ENCODE measurements at regions of chr5 and their contacts with region 1.

Region 1: DNA sequence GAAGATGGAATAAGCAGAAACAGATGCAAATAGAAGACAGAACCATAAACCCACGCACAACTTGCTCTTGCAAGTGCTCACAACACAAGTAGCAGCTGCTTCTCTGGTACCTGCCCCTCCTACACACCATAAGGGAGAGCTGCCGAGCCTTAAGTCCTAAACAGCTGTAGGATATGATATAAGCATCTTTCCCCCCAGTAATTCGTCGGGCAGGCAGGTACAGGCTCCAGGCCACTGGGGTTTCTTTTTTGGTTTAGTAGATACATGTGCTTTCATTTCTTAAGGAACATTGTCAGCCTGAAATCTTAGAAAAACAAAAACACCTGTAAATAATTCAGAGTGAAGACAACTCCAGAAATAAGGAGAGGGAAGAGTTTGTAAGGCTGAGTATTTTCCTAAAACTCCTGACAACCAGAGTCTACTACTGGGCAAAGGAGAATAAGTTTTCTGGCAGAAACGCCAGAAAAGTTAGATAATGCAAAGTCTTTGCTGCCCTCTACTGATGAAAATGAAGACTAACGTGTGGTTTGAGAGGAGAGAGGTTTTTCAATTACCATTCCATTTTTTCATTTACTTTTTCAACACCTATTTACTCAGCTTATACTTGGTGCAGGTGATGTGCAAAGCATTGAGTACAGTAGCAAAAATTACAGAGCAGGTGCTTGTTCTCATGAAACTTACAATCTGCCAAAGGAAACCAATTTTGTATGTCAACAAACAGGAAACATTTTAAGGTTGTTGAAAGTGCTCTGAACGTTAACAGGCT is 20.1 kb upstream of the TCERG1 start:
- DNase-seq: peak in 2 of 9 experiments; percentile 34 to 57
- ATAC-seq: peak; percentile 64
- H3K4me3 ChIP-seq: no peak overlapping the region
- H3K4me3 Mint-ChIP-seq: no peak overlapping the region
- H3K27ac ChIP-seq: no peak overlapping the region
- H3K27ac Mint-ChIP-seq: no peak overlapping the region
- H3K4me1 ChIP-seq: no peaks in the 10 kb centered on the region
- H3K4me1 Mint-ChIP-seq: peaks cover 5% of the 10 kb centered on the region
- H3K27me3 ChIP-seq: no peaks in the 10 kb centered on the region
- H3K27me3 Mint-ChIP-seq: peaks cover 27% of the 10 kb centered on the region
- CTCF ChIP-seq: peak; percentile 85

Region 2: DNA sequence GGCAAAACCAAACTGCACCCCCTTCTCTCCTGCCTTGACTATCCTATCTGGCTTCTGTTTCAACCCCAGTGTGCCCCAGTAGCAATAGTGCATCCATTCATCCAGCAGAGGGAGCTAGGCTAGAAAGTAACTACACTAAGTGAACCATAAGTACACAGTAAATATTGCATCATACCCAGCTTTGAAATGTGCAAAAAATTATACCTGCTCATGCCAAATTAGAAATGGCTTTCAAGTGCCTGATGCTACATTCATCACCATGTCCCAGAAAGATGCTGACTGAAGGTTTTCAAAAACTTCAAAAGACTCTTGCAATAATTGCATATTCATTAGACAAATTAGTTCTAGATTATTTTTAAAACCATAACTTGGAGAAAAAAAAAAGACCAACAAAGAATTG is 745.4 kb before region 1 on chr5:
- CTCF ChIA-PET with region 1: no interaction called
- POLR2A ChIA-PET with region 1: no interaction called
- intact Hi-C with region 1: loop called (anchors 5 to 10 kb)
- DNase-seq: peak in 2 of 9 experiments; percentile 18 to 37
- ATAC-seq: no peak
- H3K4me3 ChIP-seq: no peak overlapping the region
- H3K4me3 Mint-ChIP-seq: no peak overlapping the region
- H3K27ac ChIP-seq: no peak overlapping the region
- H3K27ac Mint-ChIP-seq: no peak overlapping the region
- H3K4me1 ChIP-seq: no peaks in the 10 kb centered on the region
- H3K4me1 Mint-ChIP-seq: no peaks in the 10 kb centered on the region
- H3K27me3 ChIP-seq: no peaks in the 10 kb centered on the region
- H3K27me3 Mint-ChIP-seq: no peaks in the 10 kb centered on the region
- CTCF ChIP-seq: no peak

Region 3: GRCh38 chr5:146291421-146292074 is 135.5 kb before region 1 on chr5:
- CTCF ChIA-PET with region 1: interaction called, 3 read pairs
- POLR2A ChIA-PET with region 1: no interaction called
- intact Hi-C with region 1: loop called (anchors 1 kb)
- DNase-seq: peak in 2 of 9 experiments; percentile 57 to 66
- ATAC-seq: peak; percentile 62
- H3K4me3 ChIP-seq: no peak overlapping the region
- H3K4me3 Mint-ChIP-seq: no peak overlapping the region
- H3K27ac ChIP-seq: no peak overlapping the region
- H3K27ac Mint-ChIP-seq: no peak overlapping the region
- H3K4me1 ChIP-seq: no peaks in the 10 kb centered on the region
- H3K4me1 Mint-ChIP-seq: no peaks in the 10 kb centered on the region
- H3K27me3 ChIP-seq: no peaks in the 10 kb centered on the region
- H3K27me3 Mint-ChIP-seq: no peaks in the 10 kb centered on the region
- CTCF ChIP-seq: peak; percentile 84

Region 4: GRCh38 chr5:146440870-146441495 is 13.9 kb after region 1 on chr5:
- CTCF ChIA-PET with region 1: interaction called, 10 read pairs
- POLR2A ChIA-PET with region 1: no interaction called
- intact Hi-C with region 1: no loop called
- DNase-seq: no peak
- ATAC-seq: no peak
- H3K4me3 ChIP-seq: no peak overlapping the region
- H3K4me3 Mint-ChIP-seq: no peak overlapping the region
- H3K27ac ChIP-seq: no peak overlapping the region
- H3K27ac Mint-ChIP-seq: no peak overlapping the region
- H3K4me1 ChIP-seq: no peaks in the 10 kb centered on the region
- H3K4me1 Mint-ChIP-seq: no peaks in the 10 kb centered on the region
- H3K27me3 ChIP-seq: peaks cover 0 to 3% of the 10 kb centered on the region in 2 experiments
- H3K27me3 Mint-ChIP-seq: peaks cover 17% of the 10 kb centered on the region
- CTCF ChIP-seq: no peak

Measured in CD8-positive, alpha-beta T cell (primary cell).